Cardiac septum (tissue), 1 donor: ENCODE measurements at regions of chr4 and their contacts with region 1.

Region 1: DNA sequence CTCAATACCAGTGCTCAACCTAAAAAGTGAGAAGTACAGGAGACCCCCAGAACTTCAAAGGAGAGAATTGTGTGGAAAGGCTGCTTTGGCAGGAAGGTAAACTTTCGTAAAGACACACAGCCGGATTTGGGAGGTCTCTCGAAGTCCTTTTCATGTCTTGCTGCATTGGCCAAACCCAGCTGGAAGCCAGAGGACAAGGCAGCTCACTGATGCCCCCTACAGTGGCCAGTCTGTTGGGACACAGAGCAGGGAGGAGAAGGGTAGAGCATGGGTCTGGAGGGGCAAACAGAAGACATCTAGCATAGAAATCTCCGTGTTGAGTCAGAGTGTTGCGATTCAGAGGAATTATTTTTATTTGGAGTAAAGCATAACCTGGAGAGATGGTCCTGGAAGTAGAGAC is 198.9 kb downstream of the ANK2 start:
- DNase-seq: no peak

Region 2: GRCh38 chr4:113106108-113106507 is 142.2 kb before region 1 on chr4:
- intact Hi-C with region 1: loop called (anchors 10 kb)
- DNase-seq: no peak